IMR-90 (cell line): ENCODE measurements at regions of chr3 and their contacts with region 1.

Region 1: DNA sequence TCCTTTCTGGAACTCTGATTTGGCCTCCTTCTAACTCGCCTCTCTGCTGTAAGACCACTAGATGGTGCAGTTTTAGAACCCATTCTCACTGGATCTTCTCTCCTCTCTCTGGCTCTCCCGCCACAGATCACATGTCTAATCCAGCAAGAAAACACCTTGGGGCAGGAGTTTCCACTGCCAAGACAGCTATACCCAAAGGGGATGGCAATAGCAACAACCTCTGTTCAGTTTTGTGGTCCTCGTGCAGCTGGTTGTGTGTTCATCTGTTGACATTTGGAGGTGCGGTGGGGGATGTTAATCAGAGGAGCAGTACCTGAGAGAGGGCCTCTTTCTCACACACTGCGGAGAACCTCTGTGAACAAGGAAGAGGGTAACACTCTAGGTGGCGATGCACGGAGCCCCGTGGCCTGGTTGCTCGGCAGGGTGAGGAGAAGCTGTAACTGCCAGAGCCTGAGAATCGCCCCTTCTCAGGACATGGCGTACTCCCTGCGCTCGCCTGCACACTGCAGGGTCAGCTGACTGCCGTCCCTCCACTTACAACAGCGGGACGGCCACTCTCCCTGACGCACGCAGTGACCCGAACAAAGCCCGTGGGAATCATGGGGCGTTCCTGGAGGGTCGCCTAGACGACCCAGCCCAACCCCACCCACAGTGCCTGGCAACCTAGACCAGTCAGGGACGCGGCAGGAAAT is at the start of gene TEX55:
- DNase-seq: peak; percentile 61
- ATAC-seq: peak; percentile 81
- H3K4me3 ChIP-seq: no peak within 1 kb of the TSS
- H3K27ac ChIP-seq: no peak within 1 kb of the TSS
- H3K4me1 ChIP-seq: peaks cover 4% of the 10 kb centered on the region
- H3K27me3 ChIP-seq: no peaks in the 10 kb centered on the region
- CTCF ChIP-seq: peak; percentile 76
- POLR2A ChIP-seq: no peak
- RAD21 ChIP-seq: peak; percentile 81
- total RNA-seq, gene TEX55: not detected in 2 replicates

Region 2: GRCh38 chr3:119063471-119063870 is 82.2 kb before region 1 on chr3:
- CTCF ChIA-PET with region 1: no interaction called
- POLR2A ChIA-PET with region 1: no interaction called
- dilution Hi-C with region 1: no loop called
- in situ Hi-C with region 1: no loop called
- intact Hi-C with region 1: no loop called
- DNase-seq: no peak
- ATAC-seq: no peak
- H3K4me3 ChIP-seq: no peak overlapping the region
- H3K27ac ChIP-seq: no peak overlapping the region
- H3K4me1 ChIP-seq: no peaks in the 10 kb centered on the region
- H3K27me3 ChIP-seq: no peaks in the 10 kb centered on the region
- CTCF ChIP-seq: no peak
- POLR2A ChIP-seq: no peak
- RAD21 ChIP-seq: no peak

Region 3: GRCh38 chr3:119184796-119185570 is 39.3 kb after region 1 on chr3:
- CTCF ChIA-PET with region 1: no interaction called
- POLR2A ChIA-PET with region 1: no interaction called
- dilution Hi-C with region 1: no loop called
- in situ Hi-C with region 1: no loop called
- intact Hi-C with region 1: loop called (anchors 5 kb)
- DNase-seq: peak; percentile 95
- ATAC-seq: peak; percentile 91
- H3K4me3 ChIP-seq: no peak overlapping the region
- H3K27ac ChIP-seq: peak overlapping the region; percentile 87
- H3K4me1 ChIP-seq: peaks cover 25% of the 10 kb centered on the region
- H3K27me3 ChIP-seq: no peaks in the 10 kb centered on the region
- CTCF ChIP-seq: no peak
- POLR2A ChIP-seq: no peak
- RAD21 ChIP-seq: no peak

Region 4: DNA sequence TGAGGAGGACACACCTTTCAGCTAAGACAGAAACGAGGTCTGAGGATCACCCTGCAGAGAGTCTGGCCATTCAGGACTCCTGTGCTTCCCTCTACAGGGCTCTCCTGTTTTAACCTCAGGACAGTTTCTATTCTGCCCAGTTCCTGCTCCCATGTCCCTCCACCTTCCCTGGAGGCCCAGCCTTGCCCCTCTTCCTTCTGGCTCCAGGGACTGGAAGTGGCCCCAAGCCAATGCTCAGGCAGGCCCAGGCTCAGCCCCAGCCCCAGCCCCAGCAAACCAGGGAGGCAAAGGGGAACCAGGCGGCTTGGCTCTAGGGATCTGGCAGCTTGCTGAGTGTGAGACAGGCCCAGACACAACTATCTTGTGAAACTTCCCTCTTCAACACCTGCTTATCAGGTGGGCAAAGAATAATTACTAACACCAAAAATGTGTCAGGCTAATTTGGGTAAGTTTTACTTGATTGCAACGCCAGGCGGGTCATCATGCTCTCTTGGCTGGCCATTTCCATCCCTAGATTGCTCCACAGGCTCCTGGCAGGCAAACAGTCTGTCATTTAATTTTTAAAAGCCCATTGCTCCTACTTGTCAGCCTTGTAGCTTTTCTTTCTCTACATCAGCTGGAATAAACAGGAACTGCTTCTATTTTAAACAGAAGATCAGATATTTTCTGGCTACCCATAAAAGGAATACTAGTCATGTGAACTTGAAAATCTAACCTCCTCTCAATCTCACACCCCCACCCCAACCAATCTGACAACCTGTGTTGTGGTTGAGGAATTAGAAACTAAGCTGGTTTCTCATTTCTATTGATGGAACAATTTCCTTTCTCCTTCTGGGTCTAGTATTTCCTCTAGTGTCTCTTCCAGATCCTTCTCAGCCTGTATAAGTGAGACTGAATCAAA is 61.2 kb after region 1 on chr3:
- CTCF ChIA-PET with region 1: no interaction called
- POLR2A ChIA-PET with region 1: no interaction called
- dilution Hi-C with region 1: no loop called
- in situ Hi-C with region 1: no loop called
- intact Hi-C with region 1: loop called (anchors 2 kb)
- DNase-seq: no peak
- ATAC-seq: peak; percentile 62
- H3K4me3 ChIP-seq: no peak overlapping the region
- H3K27ac ChIP-seq: no peak overlapping the region
- H3K4me1 ChIP-seq: peaks cover 17% of the 10 kb centered on the region
- H3K27me3 ChIP-seq: no peaks in the 10 kb centered on the region
- CTCF ChIP-seq: no peak; the same call in 1 of the 2 replicates
- POLR2A ChIP-seq: no peak
- RAD21 ChIP-seq: 0 out of 2 replicates have a peak, but pooled peaks have one; percentile 8

Region 5: GRCh38 chr3:119240591-119241434 is 95.2 kb after region 1 on chr3 and contains the start of gene B4GALT4:
- CTCF ChIA-PET with region 1: interaction called, 17 read pairs
- POLR2A ChIA-PET with region 1: interaction called, 10 read pairs
- dilution Hi-C with region 1: no loop called
- in situ Hi-C with region 1: loop called (anchors 5 kb)
- intact Hi-C with region 1: loop called (anchors 1 kb)
- DNase-seq: peak; percentile 84
- ATAC-seq: peak; percentile 96
- H3K4me3 ChIP-seq: peak within 1 kb of the TSS; percentile 82
- H3K27ac ChIP-seq: peak within 1 kb of the TSS; percentile 84
- H3K4me1 ChIP-seq: peaks cover 2% of the 10 kb centered on the region; the same call in 1 of the 2 replicates
- H3K27me3 ChIP-seq: no peaks in the 10 kb centered on the region
- CTCF ChIP-seq: no peak
- POLR2A ChIP-seq: peak; percentile 95
- RAD21 ChIP-seq: no peak
- total RNA-seq, gene B4GALT4: 30.3 and 30.6 TPM in 2 replicates

Region 6: DNA sequence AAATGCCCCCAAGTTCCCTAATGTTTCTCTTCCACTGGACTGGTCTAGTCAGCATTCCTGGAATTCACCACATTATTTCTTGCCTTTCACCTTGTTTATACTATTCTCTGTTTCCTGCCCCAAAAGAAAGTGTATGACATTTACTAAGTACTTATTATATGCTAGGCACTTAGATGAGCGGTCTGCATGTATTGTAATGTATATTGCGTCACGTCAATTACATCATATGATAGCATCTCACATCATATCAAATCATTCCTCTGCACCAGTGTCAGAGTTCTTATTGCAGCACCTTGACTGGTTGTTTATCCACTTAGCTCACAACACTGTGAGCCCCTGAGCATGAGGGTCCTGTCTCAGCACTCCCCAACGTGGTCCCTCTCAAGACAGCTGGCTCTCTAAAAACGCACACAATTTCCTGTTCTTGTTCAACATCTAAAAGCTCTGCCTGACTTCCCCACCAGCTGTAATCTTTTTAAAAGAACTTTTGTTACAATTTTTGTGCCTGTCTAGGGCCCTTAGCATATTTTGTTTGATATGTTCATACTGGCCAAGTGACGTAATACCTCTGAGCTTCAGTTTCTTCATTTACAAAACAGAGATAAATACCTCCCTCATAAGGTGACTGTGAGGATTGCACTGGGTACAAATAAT is 207.3 kb after region 1 on chr3:
- CTCF ChIA-PET with region 1: no interaction called
- POLR2A ChIA-PET with region 1: no interaction called
- dilution Hi-C with region 1: no loop called
- in situ Hi-C with region 1: no loop called
- intact Hi-C with region 1: loop called (anchors 2 kb)
- DNase-seq: peak; percentile 89
- ATAC-seq: peak; percentile 83
- H3K4me3 ChIP-seq: no peak overlapping the region
- H3K27ac ChIP-seq: peak overlapping the region; percentile 94
- H3K4me1 ChIP-seq: peaks cover 19% of the 10 kb centered on the region
- H3K27me3 ChIP-seq: no peaks in the 10 kb centered on the region
- CTCF ChIP-seq: peak; percentile 64
- POLR2A ChIP-seq: no peak
- RAD21 ChIP-seq: peak; percentile 74

Region 7: GRCh38 chr3:119380697-119381096 is 235.1 kb after region 1 on chr3:
- CTCF ChIA-PET with region 1: no interaction called
- POLR2A ChIA-PET with region 1: no interaction called
- dilution Hi-C with region 1: no loop called
- in situ Hi-C with region 1: no loop called
- intact Hi-C with region 1: no loop called
- DNase-seq: peak; percentile 11
- ATAC-seq: no peak
- H3K4me3 ChIP-seq: no peak overlapping the region
- H3K27ac ChIP-seq: no peak overlapping the region
- H3K4me1 ChIP-seq: no peaks in the 10 kb centered on the region
- H3K27me3 ChIP-seq: no peaks in the 10 kb centered on the region
- CTCF ChIP-seq: no peak
- POLR2A ChIP-seq: no peak
- RAD21 ChIP-seq: no peak